ENCODE measurements at regions of chrX and their contacts with region 1.

Region 1: DNA sequence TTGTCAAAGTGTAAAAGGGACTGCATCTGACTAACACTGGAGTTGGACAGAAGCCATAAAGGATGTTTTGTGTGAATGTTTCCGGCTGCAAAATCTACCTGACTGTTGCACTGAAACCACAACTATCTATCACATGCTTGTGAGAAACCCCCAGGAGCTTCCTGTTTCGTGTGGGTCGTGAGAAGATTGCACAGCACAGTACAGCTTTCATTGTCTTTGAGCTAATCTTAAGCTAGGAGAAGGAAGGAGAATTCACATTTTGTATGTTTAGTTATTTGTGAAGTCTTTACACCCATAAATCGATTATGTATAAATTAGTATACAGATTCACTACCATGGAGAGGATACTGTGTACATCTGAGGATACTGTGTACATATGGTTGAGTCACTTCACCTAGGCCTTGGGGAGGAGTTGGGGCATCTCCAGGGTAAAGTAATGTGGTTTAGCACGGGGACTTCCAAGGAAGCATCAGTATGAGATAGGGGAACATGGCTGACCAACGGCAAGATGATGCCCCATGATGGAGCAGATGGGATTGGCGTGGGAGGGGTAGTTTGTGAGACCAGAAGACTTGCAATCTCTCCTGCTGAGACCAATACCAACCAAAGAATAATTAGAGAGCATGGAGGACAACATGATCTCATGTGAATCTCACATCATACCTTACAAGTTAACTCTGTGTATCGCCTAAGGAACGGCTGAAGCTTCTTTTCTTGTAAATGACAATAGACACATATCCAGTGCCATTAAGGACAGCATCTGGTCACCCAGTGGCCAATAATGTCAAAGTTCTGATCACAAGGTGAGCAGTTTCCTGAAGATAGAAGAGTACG is 43.1 kb upstream of the FAM9C start:
- DNase-seq: peak; percentile 81
- ATAC-seq: peak; percentile 60
- H3K4me3 Mint-ChIP-seq: peak overlapping the region; percentile 79
- H3K27ac Mint-ChIP-seq: peak overlapping the region; percentile 98
- H3K4me1 Mint-ChIP-seq: peaks cover 94% of the 10 kb centered on the region
- H3K27me3 Mint-ChIP-seq: no peaks in the 10 kb centered on the region

Region 2: GRCh38 chrX:12955882-12956703 is 131.4 kb before region 1 on chrX:
- CTCF ChIA-PET with region 1: interaction called, 173 read pairs
- POLR2A ChIA-PET with region 1: interaction called, 55 read pairs
- DNase-seq: peak; percentile 76
- ATAC-seq: peak; percentile 45
- H3K4me3 Mint-ChIP-seq: peak overlapping the region; percentile 82
- H3K27ac Mint-ChIP-seq: peak overlapping the region; percentile 98
- H3K4me1 Mint-ChIP-seq: peaks cover 64% of the 10 kb centered on the region
- H3K27me3 Mint-ChIP-seq: no peaks in the 10 kb centered on the region

Region 3: GRCh38 chrX:12984629-12985319 is 102.8 kb before region 1 on chrX:
- CTCF ChIA-PET with region 1: interaction called, 55 read pairs
- POLR2A ChIA-PET with region 1: interaction called, 779 read pairs
- DNase-seq: peak; percentile 70
- ATAC-seq: peak; percentile 74
- H3K4me3 Mint-ChIP-seq: peak overlapping the region; percentile 52
- H3K27ac Mint-ChIP-seq: peak overlapping the region; percentile 97
- H3K4me1 Mint-ChIP-seq: peaks cover 70% of the 10 kb centered on the region
- H3K27me3 Mint-ChIP-seq: no peaks in the 10 kb centered on the region

Region 4: DNA sequence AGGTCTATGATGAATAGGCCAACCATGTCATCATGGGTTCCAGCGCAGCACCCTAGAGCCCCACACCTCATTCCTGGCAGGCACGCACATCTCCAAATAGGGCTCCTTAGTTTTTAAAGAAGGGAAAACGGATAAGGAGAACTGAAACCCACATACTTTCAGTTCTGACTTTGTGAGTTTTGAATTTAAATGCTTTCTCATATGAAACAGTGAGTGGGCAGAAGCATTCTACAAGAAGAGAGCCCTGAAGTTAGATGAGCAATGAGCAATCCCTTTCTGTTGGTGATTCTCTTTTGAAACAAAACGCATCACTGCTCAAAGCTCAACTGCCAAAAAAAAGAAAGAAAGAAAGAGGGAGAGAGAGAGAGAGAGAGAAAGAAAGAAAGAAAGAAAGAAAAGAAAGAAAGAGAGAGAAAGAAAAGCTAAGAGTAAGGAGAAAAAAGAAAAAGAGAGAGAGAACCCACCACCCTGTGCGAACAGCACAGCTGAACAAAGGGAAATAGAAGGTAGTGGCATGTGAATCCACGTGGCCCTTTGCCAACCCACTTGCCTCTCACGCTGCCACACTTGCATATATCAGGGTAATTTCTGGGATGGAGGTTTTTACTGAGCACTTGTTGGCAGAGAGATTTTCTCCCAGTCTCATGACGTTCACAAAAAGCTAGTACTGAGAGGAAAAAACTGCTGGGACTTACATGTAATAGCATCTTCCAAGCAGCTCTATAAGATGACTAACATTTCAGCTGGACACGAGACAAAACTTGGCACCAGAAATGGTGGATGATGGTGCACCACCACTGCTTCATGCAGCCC is 81.7 kb before region 1 on chrX:
- CTCF ChIA-PET with region 1: interaction called, 40 read pairs
- POLR2A ChIA-PET with region 1: interaction called, 37 read pairs
- DNase-seq: no peak
- ATAC-seq: peak; percentile 34
- H3K4me3 Mint-ChIP-seq: peak overlapping the region; percentile 58
- H3K27ac Mint-ChIP-seq: peak overlapping the region; percentile 98
- H3K4me1 Mint-ChIP-seq: peaks cover 67% of the 10 kb centered on the region
- H3K27me3 Mint-ChIP-seq: no peaks in the 10 kb centered on the region

Region 5: GRCh38 chrX:13051529-13052172 is 35.9 kb before region 1 on chrX:
- CTCF ChIA-PET with region 1: interaction called, 3 read pairs
- POLR2A ChIA-PET with region 1: interaction called, 12 read pairs
- DNase-seq: peak; percentile 25
- ATAC-seq: peak; percentile 49
- H3K4me3 Mint-ChIP-seq: no peak overlapping the region
- H3K27ac Mint-ChIP-seq: peak overlapping the region; percentile 78
- H3K4me1 Mint-ChIP-seq: peaks cover 60% of the 10 kb centered on the region
- H3K27me3 Mint-ChIP-seq: no peaks in the 10 kb centered on the region

Region 6: GRCh38 chrX:13194291-13195103 is 107.0 kb after region 1 on chrX:
- CTCF ChIA-PET with region 1: no interaction called
- POLR2A ChIA-PET with region 1: no interaction called
- DNase-seq: no peak
- ATAC-seq: no peak
- H3K4me3 Mint-ChIP-seq: no peak overlapping the region
- H3K27ac Mint-ChIP-seq: no peak overlapping the region
- H3K4me1 Mint-ChIP-seq: no peaks in the 10 kb centered on the region
- H3K27me3 Mint-ChIP-seq: no peaks in the 10 kb centered on the region

Region 7: GRCh38 chrX:13487731-13488523 is 400.4 kb after region 1 on chrX:
- CTCF ChIA-PET with region 1: interaction called, 53 read pairs
- POLR2A ChIA-PET with region 1: interaction called, 6 read pairs
- DNase-seq: peak; percentile 62
- ATAC-seq: peak; percentile 84
- H3K4me3 Mint-ChIP-seq: no peak overlapping the region
- H3K27ac Mint-ChIP-seq: peak overlapping the region; percentile 76
- H3K4me1 Mint-ChIP-seq: peaks cover 41% of the 10 kb centered on the region
- H3K27me3 Mint-ChIP-seq: no peaks in the 10 kb centered on the region

Measured in activated CD8-positive, alpha-beta T cell treated with anti-CD3 and anti-CD28 coated beads, Interleukin-2, amount 10 ng/mL, durations not matched to agents 7 days and 5 days (primary cell).